ENCODE measurements at regions of chr5 and their contacts with region 1.

Region 1: GRCh38 chr5:98768160-98769005 is 5.1 kb upstream of the RGMB start:
- DNase-seq: peak in 1 of 2 experiments; percentile 50
- H3K4me3 ChIP-seq: peak overlapping the region; percentile 66
- H3K27ac ChIP-seq: no peak overlapping the region
- H3K4me1 ChIP-seq: peaks cover 13% of the 10 kb centered on the region
- H3K27me3 ChIP-seq: no peaks in the 10 kb centered on the region
- CTCF ChIP-seq: peak; percentile 86

Region 2: GRCh38 chr5:98454904-98455303 is 313.5 kb before region 1 on chr5:
- CTCF ChIA-PET with region 1: no interaction called
- POLR2A ChIA-PET with region 1: no interaction called
- intact Hi-C with region 1: loop called (anchors 1 kb)
- DNase-seq: peak in 1 of 2 experiments; percentile 50
- H3K4me3 ChIP-seq: no peak overlapping the region
- H3K27ac ChIP-seq: no peak overlapping the region
- H3K4me1 ChIP-seq: no peaks in the 10 kb centered on the region
- H3K27me3 ChIP-seq: no peaks in the 10 kb centered on the region
- CTCF ChIP-seq: no peak; the same call in 1 of the 2 replicates

Region 3: GRCh38 chr5:98755406-98755805 is 13.0 kb before region 1 on chr5:
- CTCF ChIA-PET with region 1: no interaction called
- POLR2A ChIA-PET with region 1: no interaction called
- intact Hi-C with region 1: no loop called
- DNase-seq: peak in 1 of 2 experiments; percentile 95
- H3K4me3 ChIP-seq: no peak overlapping the region
- H3K27ac ChIP-seq: peak overlapping the region; percentile 73
- H3K4me1 ChIP-seq: peaks cover 20% of the 10 kb centered on the region
- H3K27me3 ChIP-seq: no peaks in the 10 kb centered on the region
- CTCF ChIP-seq: no peak

Measured in PC-9 (cell line).